ENCODE measurements at regions of chr2 and their contacts with region 1.

Region 1: GRCh38 chr2:38535744-38536506 is 66.8 kb downstream of the HNRNPLL start:
- DNase-seq: peak; percentile 83 to 87 (median 85)
- ATAC-seq: peak; percentile 98
- H3K4me3 ChIP-seq: peak overlapping the region; percentile 53
- H3K27ac ChIP-seq: no peak overlapping the region; the same call in 2 of the 3 replicates
- H3K4me1 ChIP-seq: peaks cover 7 to 16% of the 10 kb centered on the region in 2 experiments; a peak in 3 of 5 replicates
- H3K27me3 ChIP-seq: peaks cover 19 to 40% of the 10 kb centered on the region in 2 experiments; a peak in 3 of 5 replicates
- CTCF ChIP-seq: peak; percentile 77 to 93 (median 87)
- EP300 ChIP-seq: no peak
- POLR2A ChIP-seq: no peak
- RAD21 ChIP-seq: peak; percentile 84 to 92

Region 2: DNA sequence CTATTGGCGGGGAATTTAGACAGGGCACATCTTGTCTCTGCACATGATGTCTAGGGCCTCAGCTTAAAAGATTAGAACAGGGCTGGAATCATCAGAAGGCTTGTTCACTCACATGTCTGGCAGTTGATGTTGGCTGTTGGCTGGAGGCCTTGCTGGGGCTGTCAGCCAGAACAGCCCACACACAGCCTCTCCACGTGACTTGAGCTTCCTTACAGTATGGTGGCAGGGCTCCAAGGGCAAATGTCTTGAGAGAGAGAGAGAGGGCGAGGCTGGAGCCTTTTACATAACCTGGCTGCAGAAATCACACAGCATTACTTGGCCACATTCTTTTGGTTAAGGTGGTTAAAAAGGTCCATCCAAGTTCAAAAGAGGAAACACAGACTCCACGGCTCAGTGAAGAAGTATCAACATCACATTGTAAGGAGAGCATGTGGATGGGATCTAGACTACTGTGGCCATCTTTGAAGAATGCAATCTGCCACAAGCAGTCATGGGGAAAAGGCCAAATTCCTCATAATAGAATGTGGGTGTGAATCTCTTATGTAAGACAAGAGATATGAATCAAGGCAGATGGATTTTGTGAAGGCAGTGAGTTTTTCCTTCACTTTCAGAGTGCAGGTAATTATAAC is 184.8 kb after region 1 on chr2:
- CTCF ChIA-PET with region 1: interaction called, 18 read pairs
- POLR2A ChIA-PET with region 1: no interaction called
- in situ Hi-C with region 1: no loop called
- intact Hi-C with region 1: no loop called
- DNase-seq: peak in 1 of 4 experiments; percentile 55
- ATAC-seq: peak; percentile 65
- H3K4me3 ChIP-seq: no peak overlapping the region
- H3K27ac ChIP-seq: no peak overlapping the region
- H3K4me1 ChIP-seq: no peaks in the 10 kb centered on the region; a peak in 2 of 5 replicates
- H3K27me3 ChIP-seq: no peaks in the 10 kb centered on the region
- CTCF ChIP-seq: no peak
- EP300 ChIP-seq: no peak
- POLR2A ChIP-seq: no peak
- RAD21 ChIP-seq: peak in 1 of 2 experiments; percentile 13; a peak in 1 of 4 replicates

Region 3: DNA sequence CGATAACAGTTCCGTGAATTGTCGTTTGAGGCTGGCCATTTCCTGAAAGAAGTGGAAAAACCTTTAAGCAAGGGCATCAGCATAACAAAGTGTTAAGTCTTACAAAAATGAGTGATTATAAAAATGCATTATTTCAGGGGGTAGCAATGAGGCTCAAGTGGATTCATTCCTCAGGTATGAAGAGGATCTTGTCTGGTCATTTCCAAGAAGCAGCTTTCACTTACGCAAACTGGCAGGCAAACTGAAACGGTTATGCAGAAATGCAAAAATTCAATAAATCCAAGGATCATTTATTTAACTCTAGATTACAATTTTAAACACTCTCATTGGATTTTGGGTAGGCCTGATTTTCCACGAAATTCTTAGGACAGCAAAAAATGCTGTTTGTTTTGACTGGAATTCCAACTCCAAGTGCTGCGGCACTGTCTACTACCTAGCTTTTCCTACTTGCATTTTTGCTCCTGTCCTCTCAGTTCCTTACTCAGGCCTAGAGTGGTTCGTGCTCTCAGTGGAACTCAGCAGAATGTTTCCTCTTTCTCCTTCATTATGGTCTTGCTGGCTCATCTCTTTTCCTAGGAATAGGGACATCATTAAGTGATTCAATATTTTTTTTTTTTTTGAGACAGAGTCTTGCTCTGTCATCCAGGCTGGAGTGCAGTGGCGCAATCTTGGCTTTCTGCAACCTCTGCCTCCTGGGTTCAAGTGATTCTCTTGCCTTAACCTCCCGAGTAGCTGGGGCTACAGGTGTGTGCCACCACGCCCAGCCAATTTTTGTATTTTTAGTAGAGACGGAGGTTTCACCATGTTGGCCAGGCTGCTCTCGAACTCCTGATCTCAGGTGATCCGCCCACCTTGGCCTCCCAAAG is 279.9 kb after region 1 on chr2:
- CTCF ChIA-PET with region 1: interaction called, 3 read pairs
- POLR2A ChIA-PET with region 1: no interaction called
- in situ Hi-C with region 1: no loop called
- intact Hi-C with region 1: loop called (anchors 10 kb)
- DNase-seq: no peak
- ATAC-seq: no peak
- H3K4me3 ChIP-seq: no peak overlapping the region
- H3K27ac ChIP-seq: no peak overlapping the region
- H3K4me1 ChIP-seq: no peaks in the 10 kb centered on the region
- H3K27me3 ChIP-seq: no peaks in the 10 kb centered on the region
- CTCF ChIP-seq: no peak
- EP300 ChIP-seq: no peak
- POLR2A ChIP-seq: no peak
- RAD21 ChIP-seq: no peak

Region 4: DNA sequence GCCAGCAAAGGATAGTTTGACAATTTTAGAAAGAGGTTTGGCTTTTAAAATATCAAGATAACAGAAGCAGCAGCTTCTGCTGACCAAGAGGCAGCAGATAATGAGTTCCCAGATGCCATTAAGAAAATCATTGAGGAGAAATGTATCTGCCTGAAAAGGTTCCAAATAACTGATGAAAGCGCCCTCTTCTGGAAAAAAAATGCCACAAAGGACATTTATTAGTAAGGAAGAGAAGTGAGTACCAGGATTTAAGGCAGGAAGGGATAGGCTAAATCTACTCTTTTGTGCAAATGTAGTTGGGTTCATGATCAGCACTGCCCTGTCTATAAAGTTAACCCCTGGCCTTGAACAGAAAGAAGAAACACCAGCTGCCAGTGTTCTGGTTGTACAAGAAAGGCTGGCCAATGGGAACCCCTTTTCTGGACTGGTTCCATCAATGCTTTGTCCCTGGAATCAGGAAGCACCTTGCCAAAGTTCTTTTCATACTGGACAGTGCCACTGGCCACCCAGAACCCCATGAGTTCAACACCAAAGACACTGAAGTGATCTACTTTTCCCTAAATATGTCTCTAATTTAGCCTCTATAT is 299.2 kb after region 1 on chr2:
- CTCF ChIA-PET with region 1: no interaction called
- POLR2A ChIA-PET with region 1: no interaction called
- in situ Hi-C with region 1: no loop called
- intact Hi-C with region 1: loop called (anchors 5 kb)
- DNase-seq: peak in 1 of 4 experiments; percentile 58
- ATAC-seq: peak; percentile 76
- H3K4me3 ChIP-seq: no peak overlapping the region
- H3K27ac ChIP-seq: no peak overlapping the region
- H3K4me1 ChIP-seq: no peaks in the 10 kb centered on the region
- H3K27me3 ChIP-seq: no peaks in the 10 kb centered on the region
- CTCF ChIP-seq: peak; percentile 33 to 59 (median 43); a peak in 4 of 6 replicates
- EP300 ChIP-seq: no peak
- POLR2A ChIP-seq: no peak
- RAD21 ChIP-seq: peak in 1 of 2 experiments; percentile 63; a peak in 2 of 4 replicates